ENCODE measurements at regions of chr10 and their contacts with region 1.

Region 1: DNA sequence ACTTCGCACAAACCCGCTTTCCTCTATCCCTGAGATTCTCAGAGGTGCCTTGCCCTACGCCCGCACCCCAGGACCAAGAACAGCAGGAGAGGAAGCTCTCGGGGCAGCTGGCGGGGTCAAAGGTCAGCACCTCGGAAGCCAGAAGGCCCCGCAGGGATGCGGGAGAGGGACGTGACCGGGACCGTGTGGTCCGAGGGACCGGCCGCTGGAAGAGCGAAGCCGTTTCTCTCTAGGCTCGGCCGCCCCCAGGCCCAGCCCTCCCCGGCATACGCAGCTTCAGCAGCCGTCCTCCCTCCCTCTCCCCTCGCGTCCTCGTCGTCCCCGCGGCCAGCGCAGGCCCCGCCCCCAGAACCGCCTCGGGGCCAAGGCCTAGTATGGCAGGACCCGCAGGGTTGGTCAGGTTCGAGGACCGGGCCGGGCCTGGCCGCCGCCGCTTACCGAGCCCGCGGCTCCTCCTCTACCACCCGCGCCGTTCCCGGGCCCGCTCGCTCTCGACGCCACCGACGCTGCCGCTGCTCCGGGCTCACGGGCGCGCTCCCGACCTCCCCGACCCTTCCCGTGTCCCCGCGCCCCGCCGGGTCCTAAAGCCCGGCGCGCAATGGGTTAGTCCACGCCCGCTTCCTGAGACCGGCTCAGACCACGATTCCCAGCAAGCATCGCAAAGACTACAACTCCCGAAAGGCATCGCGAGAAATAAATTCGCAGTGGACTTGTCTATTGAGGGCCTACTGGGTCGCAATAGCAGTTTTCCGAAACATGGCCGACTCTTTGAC is at the start of gene ARMH3:
- DNase-seq: peak; percentile 75 to 93 (median 84)
- ATAC-seq: peak; percentile 95 to 97 (median 96)
- H3K4me3 ChIP-seq: peak within 1 kb of the TSS; percentile 84 to 98
- H3K4me3 Mint-ChIP-seq: peak within 1 kb of the TSS; percentile 88 to 96 (median 94)
- H3K27ac ChIP-seq: peak within 1 kb of the TSS; percentile 77
- H3K27ac Mint-ChIP-seq: peak within 1 kb of the TSS; percentile 92 to 96
- H3K4me1 ChIP-seq: peaks cover 17 to 36% of the 10 kb centered on the region in 2 experiments
- H3K4me1 Mint-ChIP-seq: peaks cover 44 to 48% (median 45%) of the 10 kb centered on the region in 3 donors
- H3K27me3 ChIP-seq: no peaks in the 10 kb centered on the region
- H3K27me3 Mint-ChIP-seq: no peaks in the 10 kb centered on the region
- total RNA-seq, gene ARMH3: 26.4 to 30.0 (median 27.2) TPM

Region 2: GRCh38 chr10:100934084-100934659 is 1121.7 kb before region 1 on chr10:
- CTCF ChIA-PET with region 1: no interaction called
- POLR2A ChIA-PET with region 1: no interaction called
- DNase-seq: peak in 1 of 35 experiments; percentile 31
- ATAC-seq: no peak
- H3K4me3 ChIP-seq: no peak overlapping the region
- H3K4me3 Mint-ChIP-seq: no peak overlapping the region
- H3K27ac ChIP-seq: no peak overlapping the region
- H3K27ac Mint-ChIP-seq: no peak overlapping the region
- H3K4me1 ChIP-seq: no peaks in the 10 kb centered on the region
- H3K4me1 Mint-ChIP-seq: peaks cover 0 to 4% (median 0%) of the 10 kb centered on the region in 3 donors
- H3K27me3 ChIP-seq: no peaks in the 10 kb centered on the region
- H3K27me3 Mint-ChIP-seq: no peaks in the 10 kb centered on the region

Region 3: DNA sequence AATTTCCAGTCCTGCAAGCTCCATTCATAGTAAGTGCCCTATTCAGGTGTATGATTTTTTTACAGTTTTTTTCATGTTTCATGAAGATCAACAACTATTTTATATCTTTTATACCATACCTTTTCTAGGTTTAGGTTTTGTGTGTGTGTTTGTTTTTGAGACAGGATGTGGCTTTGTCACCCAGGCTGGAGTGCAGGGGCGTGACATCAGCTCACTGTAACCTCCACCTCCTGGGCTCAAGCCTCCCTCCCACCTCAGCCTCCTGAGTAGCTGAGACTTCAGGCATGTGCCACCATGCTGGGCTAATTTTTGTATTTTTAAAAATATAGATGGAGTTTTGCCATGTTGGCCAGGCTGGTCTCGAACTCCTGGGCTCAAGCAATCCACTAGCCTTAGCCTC is 34.9 kb before region 1 on chr10:
- CTCF ChIA-PET with region 1: interaction called in 1 of 2 experiments, 6 read pairs
- POLR2A ChIA-PET with region 1: interaction called in 1 of 2 experiments, 11 read pairs
- DNase-seq: peak in 1 of 35 experiments; percentile 3
- ATAC-seq: no peak
- H3K4me3 ChIP-seq: no peak overlapping the region
- H3K4me3 Mint-ChIP-seq: no peak overlapping the region
- H3K27ac ChIP-seq: no peak overlapping the region
- H3K27ac Mint-ChIP-seq: no peak overlapping the region
- H3K4me1 ChIP-seq: peaks cover 0 to 4% of the 10 kb centered on the region in 2 experiments
- H3K4me1 Mint-ChIP-seq: peaks cover 0 to 1% (median 1%) of the 10 kb centered on the region in 3 donors
- H3K27me3 ChIP-seq: no peaks in the 10 kb centered on the region
- H3K27me3 Mint-ChIP-seq: no peaks in the 10 kb centered on the region

Measured in T-cell (primary cell).